ENCODE measurements at regions of chr5 and their contacts with region 1.

Region 1: DNA sequence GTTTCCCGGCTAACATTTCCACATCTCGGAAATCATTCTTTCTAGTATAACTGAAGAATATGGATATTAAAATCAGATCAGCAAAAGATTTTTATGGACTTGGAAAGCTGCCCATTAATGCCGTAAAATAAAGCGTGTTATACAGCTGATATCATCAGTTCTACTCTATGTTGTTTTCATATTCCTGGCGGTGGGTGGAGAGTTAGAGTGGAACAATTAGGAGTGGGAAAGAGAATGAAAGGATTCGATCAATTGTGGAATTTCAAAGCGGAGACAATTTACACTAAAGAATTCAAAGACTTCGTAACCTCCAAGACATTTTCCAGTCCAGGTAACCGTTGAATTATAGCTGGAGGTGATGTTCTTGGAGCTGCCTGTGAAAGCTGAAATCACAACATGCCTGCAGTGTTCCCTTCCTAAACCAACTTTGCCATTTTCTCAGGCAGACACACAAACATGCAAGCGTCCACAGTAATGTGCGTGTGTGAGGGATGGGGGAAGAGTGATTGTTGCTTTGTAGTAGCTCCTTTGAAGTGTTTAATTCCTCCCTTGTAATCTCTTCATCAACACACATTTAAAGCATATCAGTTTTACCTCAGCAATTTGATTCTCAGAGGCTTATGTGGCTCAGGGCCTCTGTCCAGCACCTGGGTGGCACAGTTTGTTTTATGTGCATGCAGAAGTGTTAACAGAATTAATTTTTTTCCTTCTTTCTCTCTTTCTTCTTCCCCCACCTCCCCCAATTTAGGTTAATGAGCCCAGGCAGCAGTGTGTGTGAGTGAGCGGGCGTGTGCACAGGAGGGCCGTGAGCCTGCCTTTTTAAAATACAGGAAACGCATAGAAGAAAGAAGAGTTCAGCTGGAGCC is 544.1 kb downstream of the RAB3C start:
- DNase-seq: no peak
- H3K4me3 Mint-ChIP-seq: no peak overlapping the region
- H3K27ac Mint-ChIP-seq: no peak overlapping the region
- H3K4me1 Mint-ChIP-seq: peaks cover 27% of the 10 kb centered on the region
- H3K27me3 Mint-ChIP-seq: no peaks in the 10 kb centered on the region

Region 2: DNA sequence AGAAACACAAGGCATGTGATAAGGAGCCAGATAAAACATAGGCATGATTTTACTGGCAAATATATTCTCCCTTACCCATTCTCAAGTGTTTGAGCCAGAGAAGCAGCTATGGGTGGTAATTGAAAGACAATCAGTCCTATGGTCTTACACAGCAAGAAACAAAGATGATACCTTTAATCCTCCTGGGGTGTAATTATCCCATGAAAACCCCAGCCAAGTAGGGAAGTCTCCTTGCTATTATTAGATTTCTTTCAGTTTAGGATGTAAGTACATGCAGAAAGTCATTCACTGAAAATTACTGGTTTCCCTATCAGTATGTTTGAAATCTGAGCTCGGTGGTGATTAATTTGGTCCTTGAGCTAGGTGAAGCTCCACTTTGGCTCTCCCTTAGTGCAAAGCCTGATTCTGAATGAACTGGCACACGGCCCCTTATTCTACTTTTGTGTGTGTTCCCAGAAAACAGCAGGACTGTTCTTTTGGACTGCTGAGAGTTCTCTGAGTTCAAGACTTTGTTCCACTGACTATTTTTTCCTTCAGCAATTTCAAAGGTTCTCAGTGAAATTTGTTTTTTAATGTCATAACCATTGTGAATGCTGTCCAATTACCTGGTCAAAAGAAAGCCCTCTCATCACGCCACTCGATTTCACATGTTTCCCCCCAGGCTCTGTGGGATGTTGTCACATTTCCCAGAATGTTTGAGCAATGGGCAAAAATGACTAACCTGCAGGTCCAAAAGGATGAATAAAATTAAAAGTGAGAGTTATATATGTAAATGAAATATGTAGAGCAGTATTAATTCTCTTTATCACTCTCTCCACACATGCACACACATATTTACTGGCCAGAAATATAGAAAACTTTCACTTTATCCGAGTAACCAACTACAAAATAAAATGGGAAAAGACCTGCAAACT is 201.1 kb before region 1 on chr5:
- CTCF ChIA-PET with region 1: interaction called, 3 read pairs
- intact Hi-C with region 1: loop called (anchors 1 kb)
- DNase-seq: peak; percentile 43
- H3K4me3 Mint-ChIP-seq: peak overlapping the region; percentile 39
- H3K27ac Mint-ChIP-seq: peak overlapping the region; percentile 84
- H3K4me1 Mint-ChIP-seq: peaks cover 39% of the 10 kb centered on the region
- H3K27me3 Mint-ChIP-seq: peaks cover 2% of the 10 kb centered on the region

Region 3: DNA sequence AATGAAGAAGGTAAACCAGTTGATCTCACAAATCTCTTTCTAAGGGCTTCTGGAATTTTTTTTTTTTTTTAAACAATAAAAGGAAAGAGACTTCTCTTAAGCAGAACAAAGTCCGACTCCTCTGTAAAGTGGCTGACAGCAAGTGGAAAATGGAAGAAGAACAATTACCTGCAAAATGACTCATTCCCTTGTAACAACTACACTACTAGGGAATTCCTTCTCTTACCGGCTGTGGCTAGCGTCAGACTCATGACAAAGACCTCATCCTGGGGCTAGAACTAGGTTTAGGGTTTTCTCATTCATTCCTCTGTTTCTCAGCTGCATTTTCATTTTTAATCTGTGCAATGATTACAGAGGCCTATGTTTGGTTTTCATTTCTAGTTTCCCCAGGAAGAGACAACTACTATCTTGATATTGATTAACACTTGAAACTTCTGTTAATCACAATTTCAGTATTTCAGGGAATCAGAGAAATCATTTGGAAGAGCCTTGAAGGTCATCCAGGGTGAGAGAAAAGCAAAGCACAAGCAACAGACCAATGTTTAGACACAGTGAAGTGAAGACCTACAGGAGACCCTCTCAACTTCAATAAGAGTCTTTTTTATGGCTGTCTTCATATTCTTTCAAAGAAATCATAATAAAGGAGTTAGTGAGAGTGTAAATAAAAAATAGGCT is 106.2 kb before region 1 on chr5:
- CTCF ChIA-PET with region 1: interaction called, 6 read pairs
- intact Hi-C with region 1: loop called (anchors 1 kb)
- DNase-seq: peak; percentile 76
- H3K4me3 Mint-ChIP-seq: peak overlapping the region; percentile 42
- H3K27ac Mint-ChIP-seq: peak overlapping the region; percentile 89
- H3K4me1 Mint-ChIP-seq: peaks cover 57% of the 10 kb centered on the region
- H3K27me3 Mint-ChIP-seq: no peaks in the 10 kb centered on the region

Region 4: DNA sequence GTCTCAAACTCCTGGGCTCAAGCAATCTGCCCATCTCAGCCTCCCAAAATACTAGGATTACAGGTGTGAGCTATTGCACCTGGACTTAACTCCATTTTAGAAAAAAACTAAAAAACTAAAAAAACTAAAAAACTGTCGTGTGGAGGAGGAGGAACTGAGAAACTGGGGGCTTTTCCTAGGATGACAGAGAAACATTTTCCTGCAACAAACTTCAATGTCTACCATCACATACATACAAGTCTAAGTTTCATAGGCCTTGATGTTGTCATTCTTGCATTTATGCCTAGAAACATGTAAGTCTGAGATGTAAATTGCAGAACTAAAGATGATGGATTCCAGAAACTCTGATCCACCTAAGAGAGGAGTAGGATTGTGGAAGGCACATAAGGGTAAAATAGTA is 12.8 kb after region 1 on chr5:
- CTCF ChIA-PET with region 1: interaction called, 16 read pairs
- intact Hi-C with region 1: no loop called
- DNase-seq: no peak
- H3K4me3 Mint-ChIP-seq: no peak overlapping the region
- H3K27ac Mint-ChIP-seq: no peak overlapping the region
- H3K4me1 Mint-ChIP-seq: no peaks in the 10 kb centered on the region
- H3K27me3 Mint-ChIP-seq: no peaks in the 10 kb centered on the region

Region 5: DNA sequence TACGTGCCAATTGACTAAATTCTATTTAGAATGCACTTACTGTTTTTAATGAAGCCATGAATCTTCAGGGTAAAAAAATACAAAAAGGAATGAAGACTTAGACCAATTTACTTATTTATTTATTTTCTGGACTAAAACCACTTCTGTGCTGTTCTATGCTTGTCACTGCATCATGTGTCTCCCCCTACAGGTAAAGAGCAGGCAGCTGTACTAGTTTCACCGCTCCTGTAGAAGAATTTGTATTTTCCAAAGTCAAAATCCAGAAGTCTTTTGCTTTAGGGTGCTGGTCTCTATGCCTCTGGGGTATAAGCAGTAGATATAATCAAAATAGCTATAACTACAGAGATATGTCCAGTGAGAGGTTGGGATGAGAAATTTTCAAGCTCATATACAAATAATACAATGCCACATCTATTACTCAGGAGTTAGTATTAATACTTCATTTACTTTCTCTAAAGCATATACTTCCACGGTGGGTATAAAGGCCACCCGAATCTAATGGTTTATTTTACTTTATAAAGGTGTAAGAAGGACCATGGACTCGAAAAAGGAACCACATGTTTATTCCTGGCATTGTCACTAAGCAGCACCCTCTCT is 47.4 kb after region 1 on chr5:
- CTCF ChIA-PET with region 1: interaction called, 23 read pairs
- intact Hi-C with region 1: loop called (anchors 1 kb)
- DNase-seq: peak; percentile 48
- H3K4me3 Mint-ChIP-seq: no peak overlapping the region
- H3K27ac Mint-ChIP-seq: no peak overlapping the region
- H3K4me1 Mint-ChIP-seq: peaks cover 10% of the 10 kb centered on the region
- H3K27me3 Mint-ChIP-seq: no peaks in the 10 kb centered on the region

Measured in activated naive CD4-positive, alpha-beta T cell treated with anti-CD3 and anti-CD28 coated beads for 36 hours (primary cell).